ENCODE measurements at regions of chr3 and their contacts with region 1.

Region 1: DNA sequence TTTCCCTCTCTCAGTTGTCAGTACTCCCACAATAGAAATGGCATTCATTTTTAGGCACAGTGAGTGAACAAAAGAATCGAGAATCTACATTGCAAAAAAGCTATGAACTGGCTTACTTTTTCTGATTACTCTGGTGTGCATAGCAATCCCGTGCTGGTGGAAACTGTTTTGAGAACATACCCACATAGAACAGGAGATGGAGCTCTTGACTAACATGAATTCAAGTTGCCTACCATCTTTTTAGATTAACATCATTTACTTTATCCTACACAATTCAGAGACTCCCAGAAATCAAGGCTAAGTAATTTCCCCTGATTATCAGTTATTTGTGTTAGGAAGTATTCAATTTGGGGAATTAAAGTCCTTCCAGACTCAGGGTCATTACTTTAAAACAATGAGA is 326.6 kb downstream of the ARPP21 start:
- DNase-seq: no peak
- H3K4me3 ChIP-seq: no peak overlapping the region
- H3K27ac ChIP-seq: no peak overlapping the region
- H3K4me1 ChIP-seq: peaks cover 0 to 22% of the 10 kb centered on the region in 2 donors
- H3K27me3 ChIP-seq: no peaks in the 10 kb centered on the region
- CTCF ChIP-seq: peak in 5 of 6 experiments; percentile 49 to 73 (median 60)
- POLR2A ChIP-seq: no peak

Region 2: DNA sequence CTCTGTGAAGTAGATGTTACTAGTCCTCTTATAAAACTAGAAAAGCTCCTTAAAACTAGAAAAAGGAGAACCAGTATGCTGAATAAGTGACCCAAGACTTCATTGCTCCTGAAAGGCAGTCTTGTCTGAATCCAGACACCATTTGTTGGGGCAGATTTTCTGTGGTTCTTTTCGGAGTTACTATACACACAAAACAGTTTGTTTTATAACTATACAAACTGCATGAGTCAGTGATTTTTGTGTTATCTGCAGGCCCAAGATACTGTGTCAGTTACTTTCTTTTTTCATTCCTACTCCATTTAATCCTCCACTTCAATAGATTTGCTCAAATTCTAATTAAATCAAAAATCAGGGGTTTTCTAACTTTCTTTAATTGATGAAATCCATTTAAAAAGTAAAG is 82.0 kb before region 1 on chr3:
- intact Hi-C with region 1: no loop called
- DNase-seq: no peak
- H3K4me3 ChIP-seq: no peak overlapping the region
- H3K27ac ChIP-seq: no peak overlapping the region
- H3K4me1 ChIP-seq: no peaks in the 10 kb centered on the region
- H3K27me3 ChIP-seq: no peaks in the 10 kb centered on the region
- CTCF ChIP-seq: no peak
- POLR2A ChIP-seq: no peak

Region 3: GRCh38 chr3:36132214-36132613 is 166.3 kb after region 1 on chr3:
- intact Hi-C with region 1: no loop called
- DNase-seq: no peak
- H3K4me3 ChIP-seq: no peak overlapping the region
- H3K27ac ChIP-seq: no peak overlapping the region
- H3K4me1 ChIP-seq: no peaks in the 10 kb centered on the region
- H3K27me3 ChIP-seq: no peaks in the 10 kb centered on the region
- CTCF ChIP-seq: no peak
- POLR2A ChIP-seq: no peak

Region 4: GRCh38 chr3:36142746-36143145 is 176.8 kb after region 1 on chr3:
- intact Hi-C with region 1: no loop called
- DNase-seq: no peak
- H3K4me3 ChIP-seq: no peak overlapping the region
- H3K27ac ChIP-seq: no peak overlapping the region
- H3K4me1 ChIP-seq: no peaks in the 10 kb centered on the region
- H3K27me3 ChIP-seq: no peaks in the 10 kb centered on the region
- CTCF ChIP-seq: no peak
- POLR2A ChIP-seq: no peak

Region 5: DNA sequence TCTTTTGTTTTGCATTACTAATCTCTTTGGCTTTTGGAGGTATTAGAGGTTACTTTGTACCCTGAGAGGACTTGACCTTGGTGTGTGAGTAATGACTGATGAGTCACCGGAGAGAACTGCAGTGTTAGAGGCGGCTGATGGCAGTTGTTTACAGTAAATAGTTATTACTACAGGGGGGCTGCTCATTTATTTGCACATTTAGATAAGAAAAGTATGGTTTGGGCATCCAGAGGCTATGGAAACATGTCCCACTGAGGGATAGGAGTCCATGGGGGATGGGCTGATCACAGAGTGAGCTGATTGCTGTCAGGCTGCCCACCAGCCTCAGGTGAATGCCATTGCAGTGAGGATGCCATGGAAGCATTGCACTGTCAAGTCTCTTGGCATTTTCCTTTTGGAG is 397.1 kb after region 1 on chr3:
- intact Hi-C with region 1: no loop called
- DNase-seq: peak; percentile 41 to 81 (median 71)
- H3K4me3 ChIP-seq: no peak overlapping the region
- H3K27ac ChIP-seq: peak overlapping the region in 3 of 5 donors; percentile 59 to 84 (median 70)
- H3K4me1 ChIP-seq: peaks cover 0 to 13% of the 10 kb centered on the region in 2 donors
- H3K27me3 ChIP-seq: no peaks in the 10 kb centered on the region
- CTCF ChIP-seq: no peak
- POLR2A ChIP-seq: no peak

Region 6: GRCh38 chr3:36700537-36701248 is 734.8 kb after region 1 on chr3:
- intact Hi-C with region 1: loop called (anchors 5 to 10 kb)
- DNase-seq: peak; percentile 37 to 83 (median 59)
- H3K4me3 ChIP-seq: no peak overlapping the region
- H3K27ac ChIP-seq: no peak overlapping the region
- H3K4me1 ChIP-seq: no peaks in the 10 kb centered on the region
- H3K27me3 ChIP-seq: no peaks in the 10 kb centered on the region
- CTCF ChIP-seq: peak; percentile 54 to 80 (median 73)
- POLR2A ChIP-seq: no peak